Prostate gland (tissue), 2 donors: ENCODE measurements at regions of chr22 and their contacts with region 1.

Region 1: GRCh38 chr22:30089655-30089974 is 9.4 kb downstream of the HORMAD2 start:
- DNase-seq: no peak
- H3K4me3 ChIP-seq: no peak overlapping the region
- H3K27ac ChIP-seq: no peak overlapping the region
- H3K4me1 ChIP-seq: no peaks in the 10 kb centered on the region
- H3K27me3 ChIP-seq: no peaks in the 10 kb centered on the region
- CTCF ChIP-seq: no peak
- POLR2A ChIP-seq: no peak

Region 2: DNA sequence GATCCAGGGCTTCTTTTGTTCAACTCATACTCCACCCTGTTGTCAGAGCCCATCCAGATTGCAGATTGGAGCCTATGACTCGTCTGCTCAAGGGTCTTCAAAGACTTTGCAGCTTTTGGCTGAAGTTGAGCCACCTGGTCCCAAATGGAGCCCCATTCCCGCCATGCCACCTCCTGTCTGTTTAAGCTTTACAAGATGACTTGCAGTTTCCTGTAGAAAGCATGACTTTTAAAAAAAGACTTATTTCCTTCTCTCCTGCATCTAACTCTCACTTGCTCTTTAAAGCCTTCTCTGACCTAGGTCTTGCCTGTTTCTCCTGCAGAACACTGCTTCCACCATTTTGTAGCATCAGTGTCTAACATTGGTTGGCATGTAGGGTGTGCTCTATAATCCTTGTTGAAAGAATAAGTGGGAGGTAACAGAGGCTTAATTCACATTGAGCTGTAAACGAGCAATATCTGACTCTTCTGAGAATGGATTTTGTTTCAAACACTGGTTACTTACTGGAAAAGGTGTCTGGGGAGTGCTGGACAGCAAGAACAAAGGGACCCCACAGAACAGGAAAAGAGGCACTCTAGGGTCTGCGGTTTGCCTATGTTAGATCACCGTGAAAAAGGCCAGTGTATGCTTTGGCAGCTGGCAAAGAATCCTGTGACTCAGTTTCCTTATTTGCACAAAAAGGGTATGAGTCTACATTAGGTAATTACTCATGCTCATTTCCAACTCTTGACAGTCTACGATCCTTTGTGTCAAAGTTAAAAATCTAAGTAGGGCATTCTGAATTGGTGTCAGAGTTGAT is 455.9 kb before region 1 on chr22:
- intact Hi-C with region 1: loop called (anchors 5 kb)
- DNase-seq: no peak
- H3K4me3 ChIP-seq: no peak overlapping the region
- H3K27ac ChIP-seq: no peak overlapping the region
- H3K4me1 ChIP-seq: no peaks in the 10 kb centered on the region
- H3K27me3 ChIP-seq: no peaks in the 10 kb centered on the region
- CTCF ChIP-seq: no peak
- POLR2A ChIP-seq: no peak

Region 3: GRCh38 chr22:29972121-29972520 is 117.5 kb before region 1 on chr22:
- intact Hi-C with region 1: no loop called
- DNase-seq: no peak
- H3K4me3 ChIP-seq: no peak overlapping the region
- H3K27ac ChIP-seq: no peak overlapping the region
- H3K4me1 ChIP-seq: no peaks in the 10 kb centered on the region
- H3K27me3 ChIP-seq: no peaks in the 10 kb centered on the region
- CTCF ChIP-seq: no peak
- POLR2A ChIP-seq: no peak

Region 4: GRCh38 chr22:30036656-30037055 is 53.0 kb before region 1 on chr22:
- intact Hi-C with region 1: no loop called
- DNase-seq: no peak
- H3K4me3 ChIP-seq: no peak overlapping the region
- H3K27ac ChIP-seq: no peak overlapping the region
- H3K4me1 ChIP-seq: no peaks in the 10 kb centered on the region
- H3K27me3 ChIP-seq: no peaks in the 10 kb centered on the region
- CTCF ChIP-seq: no peak
- POLR2A ChIP-seq: no peak

Region 5: DNA sequence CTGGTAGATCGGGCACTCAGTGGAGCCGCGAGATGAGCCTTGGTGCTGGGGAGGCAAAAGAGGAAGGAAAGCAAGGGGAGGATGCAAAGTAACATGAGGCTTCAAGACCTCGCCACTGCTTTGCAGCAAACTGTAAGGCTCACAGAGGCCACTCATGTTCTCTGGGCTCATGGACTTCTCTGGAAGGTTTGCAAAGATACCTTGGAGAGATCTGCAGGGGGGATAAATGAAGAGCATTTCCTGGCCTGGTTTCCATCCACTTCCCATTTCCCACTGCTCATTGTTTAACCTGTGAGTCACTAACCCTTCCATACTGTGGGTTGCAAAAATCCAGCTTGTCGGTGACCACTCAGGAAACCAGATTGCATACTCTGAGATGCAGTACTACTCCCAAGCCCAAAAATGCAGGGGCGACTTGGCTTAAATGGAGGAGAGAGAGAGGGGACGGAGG is 643.6 kb after region 1 on chr22:
- intact Hi-C with region 1: no loop called
- DNase-seq: no peak
- H3K4me3 ChIP-seq: no peak overlapping the region
- H3K27ac ChIP-seq: no peak overlapping the region
- H3K4me1 ChIP-seq: no peaks in the 10 kb centered on the region
- H3K27me3 ChIP-seq: no peaks in the 10 kb centered on the region
- CTCF ChIP-seq: no peak
- POLR2A ChIP-seq: no peak